ENCODE measurements at regions of chr11 and their contacts with region 1.

Region 1: DNA sequence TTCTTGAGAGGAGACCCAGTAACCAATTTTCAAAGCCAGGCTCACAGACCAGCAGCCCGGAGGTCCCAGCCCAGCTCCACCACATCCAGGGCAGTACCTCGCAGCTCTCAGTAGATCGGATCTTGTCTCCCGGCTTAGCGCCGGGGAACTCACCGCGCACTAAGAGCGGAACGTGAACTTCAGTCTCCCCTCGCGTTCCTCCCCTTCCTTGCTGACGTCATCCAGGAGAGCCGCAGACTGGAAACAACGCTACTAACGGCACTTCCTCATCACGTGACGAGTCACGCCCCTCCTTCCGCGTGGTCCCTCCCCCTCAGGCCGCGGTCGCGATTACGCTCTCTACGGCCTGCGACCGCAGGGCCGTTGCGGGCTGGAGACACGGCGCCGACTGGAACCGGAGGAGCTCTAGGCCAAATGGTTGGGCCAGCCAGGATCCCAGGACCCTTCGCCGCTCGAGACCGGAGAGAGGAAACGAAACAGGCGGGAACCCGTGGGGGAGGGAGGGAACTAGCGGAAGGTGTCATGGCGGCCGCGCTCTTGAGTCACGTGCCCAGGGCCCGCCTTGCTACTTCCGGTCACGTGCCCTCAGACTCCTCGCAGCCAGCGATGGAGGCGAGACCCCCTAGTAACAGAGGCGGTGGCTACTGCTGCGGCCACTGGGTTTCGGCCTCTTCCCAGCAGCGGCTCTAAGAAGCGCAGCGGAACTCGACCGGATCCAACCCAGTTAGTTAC is at the starts of genes GTF2H1 and HPS5:
- DNase-seq: peak; percentile 88 to 99 (median 98)
- ATAC-seq: peak; percentile 93
- H3K4me3 ChIP-seq: peak within 1 kb of the TSS; percentile 96
- H3K4me3 Mint-ChIP-seq: peak within 1 kb of the TSS; percentile 85 to 100 (median 94)
- H3K27ac ChIP-seq: peak within 1 kb of the TSS; percentile 97
- H3K27ac Mint-ChIP-seq: peak within 1 kb of the TSS; percentile 99 to 100 (median 100)
- H3K4me1 ChIP-seq: peaks cover 32 to 33% of the 10 kb centered on the region in 2 donors
- H3K4me1 Mint-ChIP-seq: peaks cover 53 to 91% (median 81%) of the 10 kb centered on the region in 7 donors
- H3K27me3 ChIP-seq: no peaks in the 10 kb centered on the region
- H3K27me3 Mint-ChIP-seq: peaks cover 0 to 2% (median 0%) of the 10 kb centered on the region in 5 donors
- total RNA-seq, gene GTF2H1: 26.3 to 63.2 (median 59.0) TPM
- total RNA-seq, gene HPS5: 13.0 to 22.3 (median 16.6) TPM

Region 2: GRCh38 chr11:17207317-17208258 is 1114.6 kb before region 1 on chr11 and contains the start of gene PIK3C2A:
- CTCF ChIA-PET with region 1: no interaction called
- POLR2A ChIA-PET with region 1: no interaction called
- intact Hi-C with region 1: loop called in 1 of 2 experiments (anchors 5 kb)
- DNase-seq: peak; percentile 84 to 94 (median 91)
- ATAC-seq: peak; percentile 98
- H3K4me3 ChIP-seq: peak within 1 kb of the TSS; percentile 93
- H3K4me3 Mint-ChIP-seq: peak within 1 kb of the TSS; percentile 90 to 99 (median 98)
- H3K27ac ChIP-seq: peak within 1 kb of the TSS; percentile 93
- H3K27ac Mint-ChIP-seq: peak within 1 kb of the TSS; percentile 87 to 99 (median 97)
- H3K4me1 ChIP-seq: peaks cover 15 to 19% of the 10 kb centered on the region in 2 donors
- H3K4me1 Mint-ChIP-seq: peaks cover 34 to 57% (median 48%) of the 10 kb centered on the region in 7 donors
- H3K27me3 ChIP-seq: no peaks in the 10 kb centered on the region
- H3K27me3 Mint-ChIP-seq: no peaks in the 10 kb centered on the region
- total RNA-seq, gene PIK3C2A: 25.4 to 56.4 (median 42.0) TPM

Region 3: GRCh38 chr11:18105802-18106574 is 216.2 kb before region 1 on chr11 and contains the start of gene SAAL1:
- CTCF ChIA-PET with region 1: no interaction called
- POLR2A ChIA-PET with region 1: interaction called, 3 read pairs
- intact Hi-C with region 1: loop called (anchors 2 to 5 kb)
- DNase-seq: peak; percentile 80 to 95 (median 84)
- ATAC-seq: peak; percentile 99
- H3K4me3 ChIP-seq: peak within 1 kb of the TSS; percentile 93
- H3K4me3 Mint-ChIP-seq: peak within 1 kb of the TSS; percentile 84 to 95 (median 93)
- H3K27ac ChIP-seq: peak within 1 kb of the TSS; percentile 78
- H3K27ac Mint-ChIP-seq: peak within 1 kb of the TSS; percentile 77 to 93 (median 90)
- H3K4me1 ChIP-seq: peaks cover 14 to 15% of the 10 kb centered on the region in 2 donors
- H3K4me1 Mint-ChIP-seq: peaks cover 21 to 54% (median 42%) of the 10 kb centered on the region in 7 donors
- H3K27me3 ChIP-seq: no peaks in the 10 kb centered on the region
- H3K27me3 Mint-ChIP-seq: peaks cover 0 to 15% (median 0%) of the 10 kb centered on the region in 5 donors
- total RNA-seq, gene SAAL1: 16.0 to 25.3 (median 19.3) TPM

Region 4: DNA sequence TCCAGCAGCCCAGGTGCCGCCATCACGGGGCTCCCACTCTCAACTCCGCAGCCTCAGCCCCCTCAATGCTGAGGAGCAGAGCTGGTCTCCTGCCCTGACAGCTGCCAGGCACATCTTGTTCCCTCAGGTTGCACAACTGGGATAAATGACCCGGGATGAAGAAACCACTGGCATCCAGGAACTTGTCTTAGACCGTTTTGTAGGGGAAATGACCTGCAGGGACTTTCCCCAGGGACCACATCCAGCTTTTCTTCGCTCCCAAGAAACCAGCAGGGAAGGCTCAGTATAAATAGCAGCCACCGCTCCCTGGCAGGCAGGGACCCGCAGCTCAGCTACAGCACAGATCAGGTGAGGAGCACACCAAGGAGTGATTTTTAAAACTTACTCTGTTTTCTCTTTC is 56.2 kb before region 1 on chr11 and contains the start of gene SAA1:
- CTCF ChIA-PET with region 1: no interaction called
- POLR2A ChIA-PET with region 1: no interaction called
- intact Hi-C with region 1: no loop called
- DNase-seq: no peak
- ATAC-seq: no peak
- H3K4me3 ChIP-seq: no peak within 1 kb of the TSS
- H3K4me3 Mint-ChIP-seq: no peak within 1 kb of the TSS
- H3K27ac ChIP-seq: no peak within 1 kb of the TSS
- H3K27ac Mint-ChIP-seq: no peak within 1 kb of the TSS
- H3K4me1 ChIP-seq: peaks cover 0 to 3% of the 10 kb centered on the region in 2 donors
- H3K4me1 Mint-ChIP-seq: peaks cover 0 to 22% (median 0%) of the 10 kb centered on the region in 7 donors
- H3K27me3 ChIP-seq: no peaks in the 10 kb centered on the region
- H3K27me3 Mint-ChIP-seq: peaks cover 0 to 10% (median 0%) of the 10 kb centered on the region in 5 donors
- total RNA-seq, gene SAA1: not detected

Region 5: DNA sequence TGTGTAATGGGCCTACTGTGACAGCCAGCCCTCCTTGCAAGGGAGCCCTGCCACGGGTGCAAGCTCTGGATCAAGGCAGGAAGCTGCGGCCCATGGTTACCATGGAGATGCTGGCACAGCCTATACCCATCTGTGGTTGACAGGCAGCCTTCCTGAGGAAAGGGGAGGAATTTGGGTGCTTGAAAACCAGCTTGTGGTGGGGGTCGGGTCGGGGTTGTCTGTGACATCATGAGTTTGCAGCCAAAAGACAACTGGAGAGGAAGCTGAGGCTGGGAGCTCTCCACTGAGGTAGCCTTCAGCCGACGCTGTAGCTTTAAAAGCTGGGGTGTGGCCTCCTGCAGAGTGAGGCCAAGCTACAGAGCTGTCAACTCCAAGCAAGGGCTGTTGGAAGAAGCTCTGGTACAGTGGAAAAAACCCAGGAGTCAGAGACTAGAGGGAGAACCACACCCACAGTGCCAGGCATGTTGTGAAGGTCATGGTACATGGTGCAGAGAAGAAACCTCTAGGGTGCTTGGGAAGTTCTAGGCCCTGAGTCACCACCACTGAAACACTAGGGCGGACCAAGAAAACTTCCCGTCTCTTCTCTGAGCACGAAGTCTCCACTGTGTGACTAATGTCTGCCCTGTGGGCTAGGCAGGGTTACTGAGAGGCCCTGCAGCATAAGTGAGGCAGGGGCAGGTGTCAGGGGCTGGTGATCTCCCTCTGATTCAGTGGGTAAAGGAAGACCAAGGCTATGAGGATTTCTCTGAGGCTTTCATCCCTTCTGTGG is 61.4 kb after region 1 on chr11:
- CTCF ChIA-PET with region 1: no interaction called
- POLR2A ChIA-PET with region 1: interaction called, 10 read pairs
- intact Hi-C with region 1: loop called in 1 of 2 experiments (anchors 1 kb)
- DNase-seq: peak; percentile 15 to 74 (median 70)
- ATAC-seq: peak; percentile 87
- H3K4me3 ChIP-seq: peak overlapping the region; percentile 49
- H3K4me3 Mint-ChIP-seq: peak overlapping the region; percentile 70 to 83 (median 80)
- H3K27ac ChIP-seq: peak overlapping the region; percentile 85
- H3K27ac Mint-ChIP-seq: peak overlapping the region; percentile 92 to 100 (median 98)
- H3K4me1 ChIP-seq: peaks cover 20 to 21% of the 10 kb centered on the region in 2 donors
- H3K4me1 Mint-ChIP-seq: peaks cover 29 to 53% (median 45%) of the 10 kb centered on the region in 7 donors
- H3K27me3 ChIP-seq: no peaks in the 10 kb centered on the region
- H3K27me3 Mint-ChIP-seq: no peaks in the 10 kb centered on the region

Region 6: DNA sequence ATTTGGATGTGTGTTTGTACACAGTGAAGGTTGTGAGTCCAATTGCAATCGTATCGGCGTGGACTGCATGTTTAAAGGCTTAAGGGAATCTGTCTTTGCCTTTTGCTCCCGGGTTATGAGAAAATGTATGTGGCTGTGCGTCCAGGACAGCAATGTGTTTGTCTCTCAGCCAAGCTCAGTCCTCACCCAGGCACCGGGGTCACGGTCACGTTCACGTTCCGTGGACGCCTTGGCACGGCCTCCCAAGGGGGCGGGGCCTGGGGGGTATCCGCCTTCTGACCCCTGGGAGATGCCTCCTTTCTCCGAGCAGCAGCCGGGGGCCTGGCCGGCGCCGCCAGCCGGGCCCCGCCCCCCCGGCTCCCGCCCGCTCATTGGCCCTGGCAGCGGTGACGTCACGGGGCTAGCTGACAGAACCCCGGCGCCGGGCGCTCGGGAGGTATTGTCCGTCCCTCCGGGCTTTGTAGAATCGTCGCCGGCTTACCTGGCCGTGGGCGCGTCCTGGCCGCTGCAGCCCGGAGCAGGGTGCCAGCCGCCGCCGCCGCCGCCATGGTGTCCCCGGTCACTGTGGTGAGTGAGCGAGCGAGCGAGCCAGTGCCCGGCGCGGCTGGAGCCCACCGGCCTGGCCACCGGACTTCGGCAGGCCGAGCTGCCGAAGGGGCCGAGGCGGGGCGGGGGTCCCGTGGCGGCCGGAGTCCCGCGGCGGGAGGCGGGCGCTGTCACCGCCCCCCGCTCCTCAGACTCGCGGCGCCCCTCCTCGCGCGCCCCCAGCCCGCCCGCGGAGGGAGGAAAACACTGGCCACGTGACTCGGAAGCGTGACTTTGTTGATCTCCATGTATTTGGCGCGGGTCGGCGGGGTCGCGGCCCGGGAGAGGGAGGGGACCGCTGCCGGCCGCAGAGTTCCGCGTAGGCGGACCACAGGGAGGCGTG is 376.5 kb after region 1 on chr11 and contains the start of gene TMEM86A:
- CTCF ChIA-PET with region 1: no interaction called
- POLR2A ChIA-PET with region 1: no interaction called
- intact Hi-C with region 1: loop called in 1 of 2 experiments (anchors 1 kb)
- DNase-seq: peak; percentile 81 to 89 (median 87)
- ATAC-seq: peak; percentile 97
- H3K4me3 ChIP-seq: peak within 1 kb of the TSS; percentile 42
- H3K4me3 Mint-ChIP-seq: peak within 1 kb of the TSS; percentile 76 to 89 (median 84)
- H3K27ac ChIP-seq: peak within 1 kb of the TSS; percentile 72
- H3K27ac Mint-ChIP-seq: peak within 1 kb of the TSS; percentile 42 to 95 (median 89)
- H3K4me1 ChIP-seq: peaks cover 6% of the 10 kb centered on the region in 2 donors
- H3K4me1 Mint-ChIP-seq: peaks cover 14 to 27% (median 20%) of the 10 kb centered on the region in 7 donors
- H3K27me3 ChIP-seq: no peaks in the 10 kb centered on the region
- H3K27me3 Mint-ChIP-seq: peaks cover 0 to 39% (median 0%) of the 10 kb centered on the region in 5 donors
- total RNA-seq, gene TMEM86A: 0.53 to 6.5 (median 5.5) TPM

Measured in naive thymus-derived CD4-positive, alpha-beta T cell (primary cell).